ENCODE measurements at regions of chr16 and their contacts with region 1.

Region 1: DNA sequence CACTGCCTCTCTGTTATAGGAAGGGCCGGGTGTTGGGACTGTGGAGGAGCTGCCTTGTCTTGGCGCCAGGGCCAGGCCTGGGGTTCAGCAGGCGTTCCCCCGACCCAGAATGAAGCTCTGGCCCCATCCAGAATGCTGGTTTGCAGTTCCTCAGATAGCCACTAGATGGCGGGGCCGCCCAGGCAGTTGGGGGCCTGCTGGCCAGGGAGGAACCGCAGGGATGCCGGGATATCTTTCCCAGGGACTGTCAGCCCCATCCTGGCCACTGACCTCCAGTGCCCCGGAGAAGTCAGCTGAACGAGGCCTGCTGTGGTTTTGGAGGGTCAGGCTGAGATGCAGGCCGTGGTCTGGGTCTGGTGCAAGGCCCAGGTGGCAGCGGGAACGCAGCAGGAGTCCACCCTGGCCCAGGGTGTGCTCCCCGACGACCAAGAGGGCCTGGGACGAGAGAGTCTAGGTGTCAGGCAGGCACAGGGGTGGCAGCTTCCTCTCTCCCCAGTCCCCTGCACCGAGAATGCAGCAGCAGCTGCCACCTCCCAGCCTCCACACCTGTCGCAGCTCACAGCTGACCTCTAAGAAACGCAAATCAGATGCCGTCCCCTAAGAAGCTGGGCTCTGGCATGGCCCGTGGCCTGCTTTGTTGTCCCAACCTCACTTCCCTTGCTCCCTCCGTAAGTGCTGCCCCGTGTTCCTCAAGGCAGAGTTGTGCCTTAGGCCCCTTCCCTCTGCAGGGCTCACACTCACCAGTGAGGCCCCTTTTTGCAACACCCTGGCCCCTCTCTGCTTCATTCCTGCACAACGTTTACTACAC is 51.2 kb downstream of the RMI2 start:
- DNase-seq: peak; percentile 38 to 78 (median 59)
- ATAC-seq: peak; percentile 74
- H3K4me3 ChIP-seq: no peak overlapping the region
- H3K4me3 Mint-ChIP-seq: no peak overlapping the region
- H3K27ac ChIP-seq: no peak overlapping the region
- H3K27ac Mint-ChIP-seq: no peak overlapping the region
- H3K4me1 ChIP-seq: peaks cover 6% of the 10 kb centered on the region
- H3K4me1 Mint-ChIP-seq: no peaks in the 10 kb centered on the region
- H3K27me3 ChIP-seq: no peaks in the 10 kb centered on the region
- H3K27me3 Mint-ChIP-seq: no peaks in the 10 kb centered on the region
- CTCF ChIP-seq: peak; percentile 99

Region 2: GRCh38 chr16:11819798-11820197 is 423.4 kb after region 1 on chr16:
- CTCF ChIA-PET with region 1: no interaction called
- POLR2A ChIA-PET with region 1: no interaction called
- intact Hi-C with region 1: loop called in 1 of 2 experiments (anchors 2 kb)
- DNase-seq: peak in 2 of 14 experiments; percentile 19 to 37
- ATAC-seq: no peak
- H3K4me3 ChIP-seq: no peak overlapping the region
- H3K4me3 Mint-ChIP-seq: no peak overlapping the region
- H3K27ac ChIP-seq: no peak overlapping the region
- H3K27ac Mint-ChIP-seq: no peak overlapping the region
- H3K4me1 ChIP-seq: peaks cover 2% of the 10 kb centered on the region
- H3K4me1 Mint-ChIP-seq: no peaks in the 10 kb centered on the region
- H3K27me3 ChIP-seq: no peaks in the 10 kb centered on the region
- H3K27me3 Mint-ChIP-seq: no peaks in the 10 kb centered on the region
- CTCF ChIP-seq: no peak